ENCODE measurements at regions of chr16 and their contacts with region 1.

Region 1: GRCh38 chr16:57906382-57907316 is 64.3 kb downstream of the CNGB1 start:
- DNase-seq: peak; percentile 74
- ATAC-seq: peak; percentile 86
- H3K4me3 Mint-ChIP-seq: no peak overlapping the region
- H3K27ac Mint-ChIP-seq: no peak overlapping the region
- H3K4me1 Mint-ChIP-seq: peaks cover 10% of the 10 kb centered on the region
- H3K27me3 Mint-ChIP-seq: no peaks in the 10 kb centered on the region
- CTCF ChIP-seq: peak; percentile 40; the same call in 1 of the 2 replicates

Region 2: GRCh38 chr16:57795431-57795878 is 111.2 kb before region 1 on chr16:
- CTCF ChIA-PET with region 1: interaction called, 12 read pairs
- POLR2A ChIA-PET with region 1: no interaction called
- DNase-seq: peak; percentile 74
- ATAC-seq: peak; percentile 68
- H3K4me3 Mint-ChIP-seq: no peak overlapping the region
- H3K27ac Mint-ChIP-seq: 0 out of 2 replicates have a peak overlapping the region, but pooled peaks have one; percentile 57
- H3K4me1 Mint-ChIP-seq: peaks cover 40% of the 10 kb centered on the region
- H3K27me3 Mint-ChIP-seq: peaks cover 18% of the 10 kb centered on the region
- CTCF ChIP-seq: peak; percentile 21; the same call in 1 of the 2 replicates

Region 3: GRCh38 chr16:57916735-57917451 is 10.2 kb after region 1 on chr16:
- CTCF ChIA-PET with region 1: interaction called, 11 read pairs
- POLR2A ChIA-PET with region 1: no interaction called
- DNase-seq: no peak
- ATAC-seq: no peak
- H3K4me3 Mint-ChIP-seq: no peak overlapping the region
- H3K27ac Mint-ChIP-seq: no peak overlapping the region
- H3K4me1 Mint-ChIP-seq: peaks cover 9% of the 10 kb centered on the region
- H3K27me3 Mint-ChIP-seq: no peaks in the 10 kb centered on the region
- CTCF ChIP-seq: no peak

Region 4: DNA sequence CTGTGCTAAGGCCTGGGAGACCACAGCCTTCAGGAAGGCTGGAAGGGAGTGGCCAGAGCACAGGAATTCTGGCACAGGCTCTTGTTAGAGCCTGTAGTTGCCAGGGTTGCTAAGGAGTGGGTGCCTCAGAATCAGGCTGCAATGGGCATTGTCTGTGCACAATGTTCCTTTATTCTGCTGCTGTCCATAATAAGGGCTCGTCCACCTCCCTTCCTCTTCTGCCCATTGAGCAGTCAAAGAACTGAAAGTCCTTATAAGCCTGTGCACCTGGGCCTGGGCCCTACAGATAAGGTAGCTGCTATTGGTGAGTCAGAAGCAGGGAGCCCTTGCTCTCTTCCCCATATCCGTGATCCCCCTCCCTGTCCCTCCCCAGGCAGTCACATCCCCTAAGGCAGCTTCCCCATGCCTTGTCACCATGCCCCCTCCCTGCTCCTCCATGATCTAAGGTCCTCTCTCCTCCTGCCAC is 69.7 kb after region 1 on chr16:
- CTCF ChIA-PET with region 1: interaction called, 26 read pairs
- POLR2A ChIA-PET with region 1: no interaction called
- DNase-seq: no peak
- ATAC-seq: no peak
- H3K4me3 Mint-ChIP-seq: no peak overlapping the region
- H3K27ac Mint-ChIP-seq: no peak overlapping the region
- H3K4me1 Mint-ChIP-seq: no peaks in the 10 kb centered on the region
- H3K27me3 Mint-ChIP-seq: no peaks in the 10 kb centered on the region
- CTCF ChIP-seq: no peak

Region 5: DNA sequence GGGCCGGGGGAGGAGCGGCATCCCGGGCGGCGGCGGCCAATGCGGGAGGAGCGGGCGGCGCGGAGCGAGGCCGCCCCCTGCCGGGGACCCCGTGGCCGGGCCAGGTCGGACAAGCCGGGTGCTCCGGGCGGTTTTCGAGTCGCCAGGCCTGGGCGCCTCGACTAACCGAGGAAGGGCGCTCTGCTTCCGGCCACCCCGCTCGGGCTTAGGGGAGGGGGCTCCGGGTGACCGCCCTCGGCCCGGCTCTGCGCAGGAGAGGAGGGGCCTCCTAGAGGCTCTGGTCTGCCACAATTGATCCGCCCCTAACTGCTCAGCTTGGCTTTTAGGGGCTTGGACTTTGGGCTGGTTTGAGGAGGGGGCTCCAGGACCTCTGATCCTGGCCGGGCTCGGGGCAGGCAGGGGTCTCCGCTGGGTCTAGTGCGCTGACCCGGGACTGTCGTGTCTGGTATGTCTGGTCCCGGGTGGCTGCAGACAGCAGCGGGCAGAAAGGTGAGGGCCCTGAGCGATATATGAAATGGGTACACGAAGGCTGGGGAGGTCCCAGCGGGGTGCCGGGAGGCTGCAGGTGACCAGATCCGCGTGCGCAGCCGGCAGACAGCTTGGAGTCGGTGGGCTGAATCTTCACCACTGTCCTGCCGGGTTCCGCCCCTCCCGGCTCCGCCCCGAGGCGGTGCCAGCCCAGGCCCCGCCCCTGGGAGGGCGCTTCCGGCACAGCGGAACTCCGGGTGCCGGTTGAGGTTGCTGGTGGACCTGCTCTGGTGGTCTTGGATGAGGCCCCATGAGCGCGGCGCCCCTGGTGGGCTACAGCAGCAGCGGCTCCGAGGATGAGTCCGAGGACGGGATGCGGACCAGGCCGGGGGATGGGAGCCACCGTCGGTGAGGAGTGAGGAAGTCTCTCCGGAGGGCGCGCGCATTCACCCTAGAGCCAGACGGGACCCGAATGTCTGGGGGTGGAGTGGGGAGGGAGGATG is 94.3 kb after region 1 on chr16 and contains the start of gene USB1:
- CTCF ChIA-PET with region 1: interaction called, 56 read pairs
- POLR2A ChIA-PET with region 1: no interaction called
- DNase-seq: peak; percentile 87
- ATAC-seq: peak; percentile 85
- H3K4me3 Mint-ChIP-seq: peak within 1 kb of the TSS; percentile 83
- H3K27ac Mint-ChIP-seq: peak within 1 kb of the TSS; percentile 70
- H3K4me1 Mint-ChIP-seq: peaks cover 23% of the 10 kb centered on the region
- H3K27me3 Mint-ChIP-seq: no peaks in the 10 kb centered on the region
- CTCF ChIP-seq: no peak; the same call in 1 of the 2 replicates
- total RNA-seq, gene USB1: 67.1 to 75.2 TPM (median 69.6 TPM) in 3 replicates